ENCODE measurements at regions of chr2 and their contacts with region 1.

Region 1: GRCh38 chr2:200486529-200486928 is 23.3 kb downstream of the KCTD18 start:
- DNase-seq: no peak
- CTCF ChIP-seq: no peak

Region 2: GRCh38 chr2:199979832-199980628 is 506.5 kb before region 1 on chr2:
- in situ Hi-C with region 1: loop called (anchors 5 kb)
- DNase-seq: peak; percentile 28
- CTCF ChIP-seq: peak; percentile 80